ENCODE measurements at regions of chr9 and their contacts with region 1.

Region 1: DNA sequence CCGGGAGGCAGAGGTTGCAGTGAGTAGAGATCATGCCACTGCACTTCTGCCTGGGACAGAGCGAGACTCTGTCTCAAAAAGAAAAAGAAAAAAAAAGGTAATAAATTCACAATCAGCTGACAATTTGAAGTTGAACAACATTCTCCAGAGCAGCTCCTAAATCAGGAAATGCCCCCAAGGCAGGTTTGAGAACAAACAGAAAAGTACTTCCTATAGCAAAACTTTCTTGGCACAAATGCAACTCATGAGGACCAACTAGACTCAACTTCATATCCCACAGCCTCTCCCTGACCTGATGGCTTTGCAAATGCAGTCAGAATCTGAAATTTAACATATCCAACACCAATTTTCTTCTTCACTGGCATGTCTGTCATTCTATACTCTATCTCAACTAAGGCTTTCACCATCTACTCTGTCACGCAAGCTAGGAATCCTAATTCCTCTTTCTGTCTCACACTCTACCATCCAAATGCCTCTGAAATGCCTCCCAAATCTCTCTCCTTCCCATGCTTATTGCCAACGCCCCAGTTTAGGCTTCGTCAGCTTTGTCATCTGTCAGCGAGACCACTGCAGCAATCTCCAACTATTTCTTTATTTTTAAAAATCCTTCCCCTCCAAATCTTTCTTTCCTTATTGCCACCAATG is 113.3 kb downstream of the MAPKAP1 start:
- DNase-seq: no peak
- ATAC-seq: peak; percentile 33; the same call in 1 of the 3 replicates
- H3K4me3 ChIP-seq: no peak overlapping the region
- H3K27ac ChIP-seq: no peak overlapping the region
- H3K4me1 ChIP-seq: no peaks in the 10 kb centered on the region
- H3K27me3 ChIP-seq: no peaks in the 10 kb centered on the region
- CTCF ChIP-seq: no peak
- EP300 ChIP-seq: no peak
- POLR2A ChIP-seq: no peak
- RAD21 ChIP-seq: no peak

Region 2: GRCh38 chr9:125361837-125362531 is 231.7 kb before region 1 on chr9:
- CTCF ChIA-PET with region 1: no interaction called
- POLR2A ChIA-PET with region 1: no interaction called
- RAD21 ChIA-PET with region 1: no interaction called
- SMC1A ChIA-PET with region 1: no interaction called
- in situ Hi-C with region 1: no loop called
- intact Hi-C with region 1: no loop called
- DNase-seq: no peak
- ATAC-seq: no peak
- H3K4me3 ChIP-seq: no peak overlapping the region
- H3K27ac ChIP-seq: no peak overlapping the region
- H3K4me1 ChIP-seq: no peaks in the 10 kb centered on the region; the same call in 1 of the 2 replicates
- H3K27me3 ChIP-seq: no peaks in the 10 kb centered on the region
- CTCF ChIP-seq: peak in 2 of 3 experiments; percentile 2 to 22; a peak in 1 of 6 replicates
- EP300 ChIP-seq: no peak
- POLR2A ChIP-seq: no peak
- RAD21 ChIP-seq: no peak

Region 3: DNA sequence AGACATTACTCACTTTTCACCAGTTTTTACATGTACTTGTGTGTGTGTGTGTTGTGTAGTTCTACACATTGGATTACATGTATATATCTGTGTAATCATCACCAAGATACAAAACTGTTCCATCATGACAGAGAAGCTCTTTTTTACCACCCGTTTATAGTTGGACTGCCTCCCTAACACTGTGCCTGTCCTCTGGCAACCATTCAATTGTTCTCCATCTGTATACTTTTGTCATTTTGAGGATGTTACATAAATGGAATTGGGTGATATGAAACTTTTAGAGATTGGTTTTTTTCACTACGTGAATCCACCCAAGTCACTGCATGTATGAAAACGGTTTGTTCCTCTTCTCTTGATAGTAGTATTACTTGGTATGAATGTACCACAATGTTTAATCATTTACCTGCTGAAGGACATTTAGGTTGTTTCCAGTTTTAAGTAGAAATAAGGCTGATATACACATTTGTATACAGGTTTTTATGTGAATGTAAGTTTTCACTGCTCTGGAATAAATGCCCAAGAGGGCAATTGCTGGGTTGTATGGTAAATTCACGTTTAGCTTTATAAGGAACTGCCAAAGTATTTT is 12.9 kb before region 1 on chr9:
- CTCF ChIA-PET with region 1: interaction called, 6 read pairs
- POLR2A ChIA-PET with region 1: no interaction called
- RAD21 ChIA-PET with region 1: interaction called, 3 read pairs
- SMC1A ChIA-PET with region 1: interaction called, 24 read pairs
- in situ Hi-C with region 1: no loop called
- intact Hi-C with region 1: no loop called
- DNase-seq: peak; percentile 25
- ATAC-seq: peak; percentile 94
- H3K4me3 ChIP-seq: no peak overlapping the region
- H3K27ac ChIP-seq: no peak overlapping the region
- H3K4me1 ChIP-seq: no peaks in the 10 kb centered on the region
- H3K27me3 ChIP-seq: no peaks in the 10 kb centered on the region
- CTCF ChIP-seq: no peak
- EP300 ChIP-seq: no peak
- POLR2A ChIP-seq: no peak
- RAD21 ChIP-seq: no peak

Region 4: GRCh38 chr9:125608489-125609224 is 14.9 kb after region 1 on chr9:
- CTCF ChIA-PET with region 1: no interaction called
- POLR2A ChIA-PET with region 1: interaction called, 3 read pairs
- RAD21 ChIA-PET with region 1: interaction called, 3 read pairs
- SMC1A ChIA-PET with region 1: interaction called, 10 read pairs
- in situ Hi-C with region 1: no loop called
- intact Hi-C with region 1: no loop called
- DNase-seq: no peak
- ATAC-seq: peak; percentile 46
- H3K4me3 ChIP-seq: no peak overlapping the region
- H3K27ac ChIP-seq: no peak overlapping the region
- H3K4me1 ChIP-seq: peaks cover 6% of the 10 kb centered on the region; the same call in 1 of the 2 replicates
- H3K27me3 ChIP-seq: no peaks in the 10 kb centered on the region
- CTCF ChIP-seq: no peak
- EP300 ChIP-seq: no peak
- POLR2A ChIP-seq: no peak
- RAD21 ChIP-seq: no peak

Region 5: GRCh38 chr9:125626187-125626586 is 32.5 kb after region 1 on chr9:
- CTCF ChIA-PET with region 1: interaction called, 5 read pairs
- POLR2A ChIA-PET with region 1: no interaction called
- RAD21 ChIA-PET with region 1: no interaction called
- SMC1A ChIA-PET with region 1: interaction called, 10 read pairs
- in situ Hi-C with region 1: no loop called
- intact Hi-C with region 1: no loop called
- DNase-seq: no peak
- ATAC-seq: peak; percentile 6; the same call in 1 of the 3 replicates
- H3K4me3 ChIP-seq: no peak overlapping the region
- H3K27ac ChIP-seq: no peak overlapping the region
- H3K4me1 ChIP-seq: peaks cover 38% of the 10 kb centered on the region
- H3K27me3 ChIP-seq: no peaks in the 10 kb centered on the region
- CTCF ChIP-seq: no peak
- EP300 ChIP-seq: no peak
- POLR2A ChIP-seq: no peak
- RAD21 ChIP-seq: no peak

Measured in GM12878 (cell line).